Mammary epithelial cell (primary cell): ENCODE measurements at regions of chr2 and their contacts with region 1.

Region 1: DNA sequence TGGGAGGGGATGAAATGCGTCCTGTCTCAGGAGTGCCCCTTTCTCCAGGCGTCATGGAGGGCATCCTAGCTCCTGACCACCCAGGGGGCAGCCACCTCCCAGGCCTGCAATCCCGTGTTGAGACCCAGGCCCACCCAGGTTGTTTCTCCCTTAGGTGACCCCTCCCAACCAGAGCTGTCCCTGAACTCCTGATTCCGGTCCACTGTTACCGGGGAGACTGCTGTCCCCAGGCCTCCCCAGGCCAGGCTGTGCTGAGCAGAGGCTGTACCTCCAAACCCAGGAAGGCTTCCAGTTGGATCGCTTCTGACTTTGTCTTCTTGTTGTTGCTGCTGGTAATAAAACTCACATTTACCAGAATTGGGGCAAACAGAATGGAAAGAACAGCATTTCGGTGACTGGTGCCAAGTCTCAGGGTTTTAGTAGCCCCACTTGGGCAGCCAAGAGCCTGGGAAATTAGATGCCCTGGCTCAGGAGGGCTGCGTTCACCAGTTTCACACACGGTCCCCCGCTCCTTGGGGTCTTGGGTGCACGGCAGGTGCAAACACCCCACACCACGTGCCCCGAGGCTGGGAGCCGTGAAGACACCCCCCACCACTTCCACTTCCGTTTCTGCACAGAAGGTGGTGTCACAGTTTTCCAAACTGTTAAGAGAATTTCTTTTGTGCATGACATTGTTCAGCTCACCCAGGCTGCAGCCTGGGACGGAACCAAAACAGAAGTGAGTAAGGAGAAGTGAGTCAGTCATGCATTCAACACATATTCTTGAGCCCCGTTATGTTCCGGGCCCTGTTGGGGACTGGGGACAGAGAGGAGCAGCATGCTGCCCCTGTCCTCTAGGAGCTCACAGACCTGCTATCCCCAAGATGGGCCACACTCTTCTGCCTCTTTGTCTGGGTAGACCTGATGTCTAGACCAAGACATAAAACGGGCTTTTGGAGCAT is 29.4 kb downstream of the ITM2C start:
- DNase-seq: no peak
- H3K4me3 ChIP-seq: no peak overlapping the region
- H3K27ac ChIP-seq: no peak overlapping the region
- H3K4me1 ChIP-seq: no peaks in the 10 kb centered on the region
- H3K27me3 ChIP-seq: peaks cover 2% of the 10 kb centered on the region
- CTCF ChIP-seq: no peak

Region 2: GRCh38 chr2:230356084-230356483 is 538.0 kb before region 1 on chr2:
- CTCF ChIA-PET with region 1: no interaction called
- dilution Hi-C with region 1: no loop called
- in situ Hi-C with region 1: no loop called
- intact Hi-C with region 1: no loop called
- DNase-seq: no peak
- H3K4me3 ChIP-seq: no peak overlapping the region
- H3K27ac ChIP-seq: no peak overlapping the region
- H3K4me1 ChIP-seq: no peaks in the 10 kb centered on the region
- H3K27me3 ChIP-seq: no peaks in the 10 kb centered on the region
- CTCF ChIP-seq: no peak

Region 3: DNA sequence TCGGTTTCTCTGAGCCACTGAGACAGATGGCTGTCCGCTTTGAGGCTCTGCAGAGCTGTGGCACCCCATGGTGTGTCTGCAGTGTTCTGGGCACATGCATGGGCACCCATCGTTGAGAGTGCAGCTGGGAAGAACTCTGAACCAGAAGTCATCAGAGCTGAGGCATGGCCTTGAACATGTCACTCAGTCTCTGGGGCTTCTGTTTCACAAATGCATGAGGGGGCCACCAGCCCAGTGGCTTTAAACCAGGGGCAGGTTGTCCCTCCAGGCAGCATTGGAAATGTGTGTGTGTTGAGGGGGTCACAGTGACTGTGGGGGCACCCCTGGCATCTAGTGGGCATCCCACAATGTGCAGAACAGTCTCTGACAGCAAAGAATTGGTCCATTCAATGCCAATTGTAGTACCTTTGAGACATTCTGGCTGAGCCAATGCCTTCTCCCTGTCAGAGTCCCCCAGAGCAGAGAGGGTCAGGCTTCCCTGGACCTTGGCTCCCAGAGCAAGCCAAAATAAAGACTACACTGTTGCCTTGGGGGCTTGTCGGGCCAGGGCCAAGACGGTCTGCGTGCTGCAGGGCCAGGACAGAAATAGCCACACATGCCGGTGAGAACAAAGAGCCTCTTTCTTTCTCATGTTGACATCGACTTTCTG is 153.3 kb after region 1 on chr2:
- CTCF ChIA-PET with region 1: no interaction called
- dilution Hi-C with region 1: loop called (anchors 10 kb)
- in situ Hi-C with region 1: no loop called
- intact Hi-C with region 1: no loop called
- DNase-seq: no peak
- H3K4me3 ChIP-seq: no peak overlapping the region
- H3K27ac ChIP-seq: no peak overlapping the region
- H3K4me1 ChIP-seq: peaks cover 3% of the 10 kb centered on the region
- H3K27me3 ChIP-seq: no peaks in the 10 kb centered on the region
- CTCF ChIP-seq: no peak